ENCODE measurements at regions of chr20 and their contacts with region 1.

Region 1: GRCh38 chr20:36605399-36606157 is at the start of gene RAB5IF:
- DNase-seq: peak; percentile 100
- ATAC-seq: peak; percentile 97
- H3K4me3 ChIP-seq: peak within 1 kb of the TSS; percentile 96
- H3K27ac ChIP-seq: peak within 1 kb of the TSS; percentile 38
- H3K4me1 ChIP-seq: peaks cover 17% of the 10 kb centered on the region
- H3K27me3 ChIP-seq: no peaks in the 10 kb centered on the region
- CTCF ChIP-seq: peak; percentile 90
- total RNA-seq, gene RAB5IF: 217 and 255 TPM in 2 replicates

Region 2: DNA sequence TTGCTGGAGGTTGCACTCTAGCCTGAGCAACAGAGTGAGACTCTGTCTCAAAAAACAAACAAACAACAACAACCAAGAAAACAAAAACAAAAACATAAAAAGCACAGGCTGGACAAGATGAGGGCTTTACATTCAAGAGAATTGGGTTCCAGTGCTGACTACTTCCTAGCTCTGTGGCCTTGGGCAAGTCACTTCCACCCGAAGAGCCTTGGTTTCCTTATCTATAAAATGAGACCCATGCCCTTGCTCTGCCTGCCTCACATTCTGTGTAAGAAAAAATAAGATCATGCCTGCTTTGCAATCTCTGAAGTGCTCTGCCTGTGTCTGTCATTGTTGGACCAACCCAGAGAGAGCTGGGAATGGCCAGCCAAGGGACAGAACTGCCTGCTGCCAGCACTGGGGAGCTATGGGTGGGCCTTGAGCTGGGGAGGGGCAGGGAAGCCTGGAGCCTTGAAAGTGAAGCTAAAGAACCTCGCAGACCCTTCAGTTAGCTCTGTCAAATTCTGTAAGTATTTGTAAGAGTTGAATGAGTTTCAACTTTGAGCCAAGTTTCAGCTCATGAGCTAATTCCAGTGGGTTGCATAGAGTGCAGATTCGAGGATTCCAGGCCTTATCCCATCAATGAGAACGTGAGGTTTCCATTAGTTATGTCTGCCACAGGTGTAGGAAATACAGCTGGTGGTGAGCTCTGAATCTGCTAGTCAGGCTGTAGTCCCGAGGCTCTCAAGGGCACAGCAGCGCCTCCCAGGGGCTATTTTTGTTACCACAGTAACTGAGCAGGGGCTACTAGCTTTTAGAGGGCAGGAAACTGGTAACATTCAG is 206.2 kb before region 1 on chr20:
- CTCF ChIA-PET with region 1: no interaction called
- POLR2A ChIA-PET with region 1: no interaction called
- intact Hi-C with region 1: no loop called
- DNase-seq: peak; percentile 78
- ATAC-seq: peak; percentile 71
- H3K4me3 ChIP-seq: no peak overlapping the region
- H3K27ac ChIP-seq: no peak overlapping the region
- H3K4me1 ChIP-seq: no peaks in the 10 kb centered on the region
- H3K27me3 ChIP-seq: peaks cover 32% of the 10 kb centered on the region
- CTCF ChIP-seq: peak; percentile 77

Region 3: GRCh38 chr20:36506253-36506652 is 99.3 kb before region 1 on chr20:
- CTCF ChIA-PET with region 1: no interaction called
- POLR2A ChIA-PET with region 1: no interaction called
- intact Hi-C with region 1: no loop called
- DNase-seq: peak; percentile 42
- ATAC-seq: peak; percentile 77
- H3K4me3 ChIP-seq: no peak overlapping the region
- H3K27ac ChIP-seq: no peak overlapping the region
- H3K4me1 ChIP-seq: no peaks in the 10 kb centered on the region
- H3K27me3 ChIP-seq: no peaks in the 10 kb centered on the region
- CTCF ChIP-seq: peak; percentile 67

Region 4: DNA sequence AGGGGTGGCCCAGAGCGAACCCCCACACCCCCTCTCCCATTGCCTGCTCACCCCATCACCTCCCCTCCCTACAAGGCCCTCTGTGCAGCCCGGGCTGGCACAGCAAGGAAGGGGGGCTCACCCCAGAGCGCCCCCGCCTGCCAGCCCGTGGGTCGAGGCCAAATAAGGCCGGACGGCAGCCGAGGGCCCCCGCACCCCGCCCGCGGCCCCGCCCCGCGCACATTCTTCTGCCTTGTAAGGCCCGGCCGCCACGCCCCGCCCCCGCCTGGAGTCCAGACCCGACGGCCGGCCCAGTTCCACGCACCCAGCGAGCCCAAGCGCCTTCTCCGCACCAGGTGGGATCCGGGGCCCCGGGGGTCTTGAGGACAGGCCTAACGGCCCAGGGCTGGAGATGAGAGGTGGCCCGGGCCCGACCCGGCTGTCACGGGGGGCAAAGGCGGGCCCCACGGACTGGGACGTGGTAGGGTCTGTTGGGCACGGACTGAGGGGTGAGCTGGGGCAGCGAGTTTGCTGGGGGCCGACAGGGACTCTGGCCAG is 64.3 kb before region 1 on chr20 and contains the start of gene MYL9:
- CTCF ChIA-PET with region 1: no interaction called
- POLR2A ChIA-PET with region 1: no interaction called
- intact Hi-C with region 1: no loop called
- DNase-seq: peak; percentile 50
- ATAC-seq: peak; percentile 81
- H3K4me3 ChIP-seq: peak within 1 kb of the TSS; percentile 72
- H3K27ac ChIP-seq: no peak within 1 kb of the TSS
- H3K4me1 ChIP-seq: peaks cover 5% of the 10 kb centered on the region; the same call in 1 of the 2 replicates
- H3K27me3 ChIP-seq: no peaks in the 10 kb centered on the region
- CTCF ChIP-seq: no peak
- total RNA-seq, gene MYL9: 10.8 and 12.0 TPM in 2 replicates

Region 5: DNA sequence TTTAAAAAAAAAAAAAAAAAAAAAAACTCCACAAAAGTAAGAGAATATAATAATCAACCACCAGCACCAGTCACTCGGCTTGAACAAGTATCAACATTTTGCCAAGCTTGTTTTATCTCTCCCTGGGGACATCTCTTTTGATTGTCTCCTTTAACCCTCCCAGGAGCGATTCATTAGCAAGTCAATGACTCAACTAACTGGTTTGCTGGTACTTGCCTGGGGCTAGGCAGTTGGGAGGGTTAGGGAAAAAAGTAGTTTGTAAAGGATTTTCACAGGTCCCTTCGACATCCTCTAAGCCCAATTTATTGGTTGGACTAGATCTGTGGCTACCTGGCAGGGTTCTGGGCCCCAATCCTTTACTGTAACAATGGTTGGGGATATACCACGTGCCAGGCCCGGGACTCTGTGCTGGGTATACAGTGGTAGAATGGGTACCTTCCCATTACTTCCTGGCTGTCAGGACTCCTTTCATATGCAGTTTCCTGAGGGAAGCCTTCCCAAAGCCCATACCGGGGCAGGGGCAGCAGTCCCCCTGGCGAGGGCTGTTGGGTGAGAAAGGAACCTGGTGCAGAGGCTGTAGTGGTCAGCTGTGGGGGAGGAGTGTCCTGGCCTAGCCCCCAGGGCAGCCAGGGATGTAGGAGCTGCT is 20.0 kb before region 1 on chr20:
- CTCF ChIA-PET with region 1: interaction called, 12 read pairs
- POLR2A ChIA-PET with region 1: interaction called, 4 read pairs
- intact Hi-C with region 1: no loop called
- DNase-seq: peak; percentile 88
- ATAC-seq: peak; percentile 85
- H3K4me3 ChIP-seq: no peak overlapping the region
- H3K27ac ChIP-seq: peak overlapping the region; percentile 29
- H3K4me1 ChIP-seq: peaks cover 15% of the 10 kb centered on the region
- H3K27me3 ChIP-seq: no peaks in the 10 kb centered on the region
- CTCF ChIP-seq: no peak

Measured in PC-3 (cell line).